Psoas muscle (tissue), 8 donors: ENCODE measurements at regions of chrX and their contacts with region 1.

Region 1: DNA sequence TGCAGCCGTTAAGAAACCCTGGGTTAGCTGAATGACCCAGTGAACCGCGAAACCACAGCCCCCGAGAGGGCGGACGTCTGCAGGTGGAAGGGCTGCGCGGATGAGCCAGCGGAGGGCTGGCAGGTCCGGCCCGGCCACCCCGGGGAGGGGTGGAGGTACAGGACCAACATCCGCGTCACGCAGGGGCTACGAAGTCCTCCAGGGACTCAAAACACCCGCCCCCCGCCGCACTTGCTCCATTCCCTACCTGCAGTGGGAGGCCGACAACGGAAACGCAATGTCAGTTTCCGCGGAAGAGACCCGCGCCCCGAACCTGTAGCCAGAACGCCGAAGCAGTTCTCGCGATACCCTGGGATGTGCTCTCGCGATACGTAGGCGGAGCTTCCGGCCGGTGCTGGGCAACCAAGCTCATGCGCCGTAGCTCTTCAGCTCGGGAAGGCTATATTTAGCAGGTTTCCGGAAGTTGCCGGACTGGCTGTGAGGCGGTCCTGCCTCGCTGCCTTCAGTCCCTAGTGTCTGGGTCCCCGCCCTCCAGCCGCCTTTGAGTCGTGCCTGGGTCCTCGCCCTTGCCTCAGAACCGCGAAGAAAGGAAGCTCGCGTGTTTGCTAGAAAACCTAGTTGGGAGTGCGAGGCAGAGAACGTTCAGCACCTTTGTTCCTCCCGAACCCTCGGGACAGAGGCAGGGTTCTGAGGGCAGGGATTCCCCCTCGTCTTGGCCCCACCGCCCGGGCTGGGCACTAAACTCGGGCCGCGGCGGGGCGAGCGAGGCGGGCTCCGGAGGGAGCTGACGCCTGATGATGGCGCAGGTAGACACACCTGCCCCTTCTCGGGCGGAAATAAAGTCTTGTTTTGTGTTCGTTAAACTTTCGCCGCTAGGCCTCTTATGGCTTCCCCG is at the starts of genes OFD1 and TRAPPC2:
- DNase-seq: peak; percentile 89 to 95
- ATAC-seq: peak; percentile 99 to 100 (median 100)
- H3K4me3 ChIP-seq: peak within 1 kb of the TSS; percentile 88
- H3K27ac ChIP-seq: peak within 1 kb of the TSS; percentile 86
- H3K4me1 ChIP-seq: peaks cover 3% of the 10 kb centered on the region
- H3K27me3 ChIP-seq: peaks cover 0 to 14% (median 0%) of the 10 kb centered on the region in 3 donors
- CTCF ChIP-seq: no peak
- total RNA-seq, gene OFD1: 7.2 to 8.2 (median 7.8) TPM
- total RNA-seq, gene TRAPPC2: 3.4 to 6.3 (median 5.0) TPM

Region 2: DNA sequence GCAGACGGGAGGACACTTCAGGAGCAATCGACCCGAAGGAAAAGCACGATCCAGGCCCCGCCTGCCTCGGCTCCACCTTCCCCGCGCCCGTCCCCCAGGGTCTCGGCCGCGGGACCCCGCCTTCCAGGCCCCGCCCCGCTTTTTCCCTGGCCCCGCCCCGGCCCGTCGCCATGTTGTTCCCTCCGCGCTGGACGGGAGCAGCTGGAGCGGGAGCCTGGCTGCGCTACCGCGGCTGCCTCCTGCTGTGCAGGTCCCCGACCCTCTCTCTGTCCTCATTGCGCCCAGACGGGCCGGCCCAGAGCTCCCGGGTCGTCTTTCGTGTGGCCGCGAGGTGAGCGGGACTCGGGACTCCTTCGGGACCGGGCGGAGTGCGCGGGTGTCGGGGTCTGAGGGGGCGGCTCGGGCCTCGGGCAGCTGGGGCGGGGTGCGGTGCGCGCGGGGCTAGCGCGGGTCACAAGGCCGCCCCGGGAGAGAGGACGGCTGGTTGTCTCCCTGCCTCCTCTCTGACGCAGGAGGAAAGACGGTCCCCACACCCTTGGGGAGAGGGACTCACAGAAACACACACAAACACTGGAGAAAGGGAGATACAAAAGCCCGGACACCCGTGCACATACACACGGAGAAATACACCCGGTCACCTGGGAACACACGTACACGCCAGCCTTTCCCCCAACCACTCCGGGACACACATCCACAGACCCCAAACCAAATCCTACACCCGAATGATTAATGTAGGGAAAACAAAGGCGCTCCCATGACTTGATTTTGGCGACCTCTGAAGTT is 45.4 kb before region 1 on chrX and contains the start of gene RAB9A:
- intact Hi-C with region 1: loop called in 1 of 2 experiments (anchors 5 kb)
- DNase-seq: peak; percentile 86 to 90
- ATAC-seq: peak; percentile 94 to 97 (median 96)
- H3K4me3 ChIP-seq: peak within 1 kb of the TSS; percentile 75
- H3K27ac ChIP-seq: peak within 1 kb of the TSS; percentile 89
- H3K4me1 ChIP-seq: peaks cover 22% of the 10 kb centered on the region
- H3K27me3 ChIP-seq: peaks cover 0 to 8% (median 0%) of the 10 kb centered on the region in 3 donors
- CTCF ChIP-seq: no peak
- total RNA-seq, gene RAB9A: 13.2 to 15.3 (median 14.2) TPM